ENCODE measurements at regions of chr15 and their contacts with region 1.

Region 1: GRCh38 chr15:51460796-51461195 is 119.3 kb downstream of the GLDN start:
- DNase-seq: no peak
- ATAC-seq: no peak
- H3K4me3 ChIP-seq: no peak overlapping the region
- H3K27ac ChIP-seq: no peak overlapping the region
- H3K4me1 ChIP-seq: no peaks in the 10 kb centered on the region
- H3K27me3 ChIP-seq: no peaks in the 10 kb centered on the region

Region 2: GRCh38 chr15:51414257-51415044 is 46.3 kb before region 1 on chr15:
- intact Hi-C with region 1: no loop called
- DNase-seq: no peak
- ATAC-seq: no peak
- H3K4me3 ChIP-seq: no peak overlapping the region
- H3K27ac ChIP-seq: no peak overlapping the region
- H3K4me1 ChIP-seq: no peaks in the 10 kb centered on the region
- H3K27me3 ChIP-seq: no peaks in the 10 kb centered on the region

Region 3: GRCh38 chr15:51516291-51516690 is 55.5 kb after region 1 on chr15:
- intact Hi-C with region 1: loop called in 1 of 2 experiments (anchors 2 kb)
- DNase-seq: no peak
- ATAC-seq: no peak
- H3K4me3 ChIP-seq: no peak overlapping the region
- H3K27ac ChIP-seq: no peak overlapping the region
- H3K4me1 ChIP-seq: no peaks in the 10 kb centered on the region
- H3K27me3 ChIP-seq: no peaks in the 10 kb centered on the region

Region 4: GRCh38 chr15:51600114-51600513 is 139.3 kb after region 1 on chr15:
- intact Hi-C with region 1: no loop called
- DNase-seq: no peak
- ATAC-seq: no peak
- H3K4me3 ChIP-seq: no peak overlapping the region
- H3K27ac ChIP-seq: no peak overlapping the region
- H3K4me1 ChIP-seq: no peaks in the 10 kb centered on the region
- H3K27me3 ChIP-seq: no peaks in the 10 kb centered on the region

Measured in aorta (tissue), 5 donors.